ENCODE measurements at regions of chr17 and their contacts with region 1.

Region 1: DNA sequence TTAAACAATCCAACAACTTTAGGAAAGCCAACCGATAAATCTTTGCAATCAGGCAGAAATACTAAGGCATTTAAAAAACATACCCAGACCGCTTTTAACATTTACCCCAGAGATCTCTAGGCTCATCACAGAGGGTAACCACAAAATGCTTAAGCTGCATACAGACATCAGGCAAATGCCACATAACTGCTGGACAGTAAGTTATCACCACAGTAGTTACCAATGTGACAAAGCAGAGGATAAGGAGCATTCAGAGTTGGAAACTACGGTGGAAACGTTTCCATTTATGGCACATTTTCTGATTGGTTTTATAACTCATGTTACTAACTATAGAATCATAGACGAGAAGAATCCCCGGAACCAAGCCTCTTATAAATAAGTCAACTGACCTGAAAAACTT is 77.5 kb downstream of the KANSL1 start:
- DNase-seq: no peak
- ATAC-seq: no peak
- H3K4me3 ChIP-seq: no peak overlapping the region
- H3K27ac ChIP-seq: no peak overlapping the region
- H3K4me1 ChIP-seq: peaks cover 20% of the 10 kb centered on the region
- CTCF ChIP-seq: no peak
- EP300 ChIP-seq: no peak
- POLR2A ChIP-seq: no peak
- RAD21 ChIP-seq: no peak

Region 2: DNA sequence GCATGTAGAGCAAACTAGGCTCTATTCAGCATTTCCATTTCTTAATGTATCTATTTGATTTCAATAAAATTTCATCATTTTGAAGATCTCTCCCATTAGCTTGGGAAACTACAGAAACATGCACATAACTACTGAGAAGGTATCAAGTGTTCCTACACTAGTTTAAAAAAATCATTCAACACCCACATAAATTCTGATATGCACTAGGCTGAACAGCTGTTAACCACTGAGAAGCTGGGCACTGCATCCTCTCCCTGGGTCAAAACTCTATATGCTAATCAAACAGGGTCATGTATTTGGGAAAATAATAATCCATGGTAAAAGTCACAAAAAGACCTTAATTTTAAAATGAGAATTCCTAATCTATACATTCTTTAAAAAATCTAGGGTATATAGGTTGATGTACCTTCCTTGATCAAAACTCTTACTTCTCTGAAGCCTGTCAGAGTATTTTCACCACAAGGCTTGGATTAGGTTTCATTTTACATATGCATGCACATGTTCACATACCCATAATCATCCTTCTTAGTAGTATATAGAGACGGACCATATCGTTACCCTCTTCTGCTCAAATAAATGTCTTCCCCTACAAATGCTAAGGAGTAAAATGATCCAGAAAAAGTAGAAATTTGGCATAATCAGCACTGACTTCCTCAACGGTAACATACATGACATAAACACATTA is 20.3 kb after region 1 on chr17:
- CTCF ChIA-PET with region 1: interaction called, 24 read pairs
- POLR2A ChIA-PET with region 1: no interaction called
- DNase-seq: no peak
- ATAC-seq: no peak
- H3K4me3 ChIP-seq: no peak overlapping the region
- H3K27ac ChIP-seq: no peak overlapping the region
- H3K4me1 ChIP-seq: peaks cover 43% of the 10 kb centered on the region
- CTCF ChIP-seq: no peak
- EP300 ChIP-seq: no peak
- POLR2A ChIP-seq: no peak
- RAD21 ChIP-seq: no peak